ENCODE measurements at regions of chr1 and their contacts with region 1.

Region 1: DNA sequence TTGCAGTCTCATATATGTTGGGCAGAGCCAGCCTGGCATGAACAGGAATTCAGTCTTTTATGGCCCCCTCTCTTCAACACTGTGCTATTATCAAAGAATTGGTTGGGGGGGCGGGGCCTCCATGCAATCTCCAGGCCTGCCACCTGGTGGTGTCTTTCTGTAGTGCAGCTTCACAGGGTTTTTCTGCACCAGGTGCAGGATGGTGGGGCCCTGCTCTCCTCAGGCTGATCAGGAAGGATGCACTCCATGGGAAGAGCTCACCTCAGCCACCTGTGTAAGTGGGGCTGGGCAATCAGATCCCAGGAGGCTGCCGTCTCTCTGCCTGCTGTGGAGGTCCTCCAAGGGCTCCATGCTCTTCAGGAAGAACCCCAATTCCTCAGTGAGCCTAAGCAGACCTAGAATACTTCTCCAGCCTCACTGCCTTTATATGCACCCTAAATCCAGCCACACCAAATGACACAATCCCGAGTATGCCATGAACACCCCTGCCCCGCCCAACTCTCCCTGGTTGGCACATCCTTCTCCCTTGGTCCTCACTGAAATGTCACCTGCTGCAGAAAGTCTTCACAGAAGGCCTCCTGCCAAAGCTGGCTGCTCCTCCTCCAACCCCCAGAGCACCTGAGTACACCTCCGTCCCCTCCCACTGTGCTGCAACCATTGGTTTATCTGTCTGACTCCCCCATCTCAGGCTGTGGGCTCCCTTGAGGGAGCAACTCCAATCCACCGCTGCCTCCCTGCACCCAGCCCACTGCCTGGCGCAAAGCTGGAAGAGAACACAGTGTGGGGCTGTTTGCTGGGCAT is 16.5 kb downstream of the STK40 start:
- DNase-seq: no peak
- ATAC-seq: peak; percentile 58
- H3K4me3 ChIP-seq: no peak overlapping the region
- H3K27ac ChIP-seq: no peak overlapping the region
- H3K4me1 ChIP-seq: peaks cover 55% of the 10 kb centered on the region
- H3K27me3 ChIP-seq: no peaks in the 10 kb centered on the region
- CTCF ChIP-seq: peak; percentile 86 to 92 (median 90)
- EP300 ChIP-seq: no peak
- POLR2A ChIP-seq: no peak
- RAD21 ChIP-seq: peak; percentile 73

Region 2: DNA sequence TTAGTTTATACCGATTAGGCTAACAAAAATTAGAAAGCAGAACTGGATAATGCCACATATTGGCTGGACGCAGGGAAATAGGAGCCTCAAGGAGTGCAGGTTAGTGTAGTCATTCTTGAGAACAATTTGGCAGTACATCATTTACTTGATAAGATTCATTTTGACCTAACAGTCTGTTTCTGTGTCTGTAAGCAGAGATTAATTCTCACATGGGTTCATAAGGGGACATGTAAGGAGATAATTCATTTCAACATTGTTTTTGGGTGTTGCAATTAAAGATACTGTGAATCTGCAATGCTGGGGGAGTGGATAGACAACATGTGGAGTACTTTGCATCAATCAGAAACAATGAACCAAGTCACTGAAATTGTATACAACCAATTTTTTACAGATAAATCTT is 406.3 kb before region 1 on chr1:
- CTCF ChIA-PET with region 1: no interaction called
- POLR2A ChIA-PET with region 1: no interaction called
- RAD21 ChIA-PET with region 1: no interaction called
- SMC1A ChIA-PET with region 1: no interaction called
- in situ Hi-C with region 1: no loop called
- intact Hi-C with region 1: no loop called
- DNase-seq: no peak
- ATAC-seq: no peak
- H3K4me3 ChIP-seq: no peak overlapping the region
- H3K27ac ChIP-seq: no peak overlapping the region
- H3K4me1 ChIP-seq: no peaks in the 10 kb centered on the region
- H3K27me3 ChIP-seq: no peaks in the 10 kb centered on the region
- CTCF ChIP-seq: no peak
- EP300 ChIP-seq: no peak
- POLR2A ChIP-seq: no peak
- RAD21 ChIP-seq: no peak

Region 3: DNA sequence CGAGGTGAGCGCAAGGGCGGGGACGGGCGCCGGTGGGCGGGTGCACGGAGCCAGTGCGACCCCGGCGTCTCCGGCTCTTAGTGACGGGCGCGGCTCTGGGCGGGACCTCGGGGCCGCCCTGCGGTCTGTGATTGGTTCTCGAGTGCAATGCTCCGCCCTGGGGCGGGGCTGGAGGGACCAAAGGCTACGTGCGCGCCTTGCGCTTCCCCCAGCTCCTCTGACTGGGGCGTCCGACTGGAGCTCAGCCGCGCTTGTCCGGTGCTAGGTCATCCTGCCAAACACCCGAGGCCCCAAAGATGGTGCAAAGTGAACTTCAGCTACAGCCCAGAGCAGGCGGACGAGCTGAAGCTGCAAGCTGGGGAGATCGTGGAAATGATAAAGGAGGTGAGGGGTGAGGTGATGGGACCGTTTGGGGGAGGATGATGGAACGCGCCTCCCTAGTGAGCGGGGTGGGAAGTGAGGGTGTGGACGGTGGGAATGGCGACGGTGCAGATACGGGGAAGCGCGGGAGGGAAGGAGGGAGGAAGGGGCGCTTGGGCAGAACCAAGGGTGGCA is 62.3 kb before region 1 on chr1:
- CTCF ChIA-PET with region 1: interaction called, 24 read pairs
- POLR2A ChIA-PET with region 1: interaction called, 3 read pairs
- RAD21 ChIA-PET with region 1: interaction called, 6 read pairs
- SMC1A ChIA-PET with region 1: interaction called, 3 read pairs
- in situ Hi-C with region 1: no loop called
- intact Hi-C with region 1: no loop called
- DNase-seq: peak; percentile 80
- ATAC-seq: peak; percentile 99
- H3K4me3 ChIP-seq: peak overlapping the region; percentile 95
- H3K27ac ChIP-seq: peak overlapping the region; percentile 46
- H3K4me1 ChIP-seq: peaks cover 27% of the 10 kb centered on the region
- H3K27me3 ChIP-seq: no peaks in the 10 kb centered on the region
- CTCF ChIP-seq: no peak
- EP300 ChIP-seq: no peak
- POLR2A ChIP-seq: peak; percentile 98
- RAD21 ChIP-seq: no peak

Region 4: GRCh38 chr1:36342481-36343478 is 26.5 kb before region 1 on chr1:
- CTCF ChIA-PET with region 1: interaction called, 157 read pairs
- POLR2A ChIA-PET with region 1: interaction called, 3 read pairs
- RAD21 ChIA-PET with region 1: interaction called, 36 read pairs
- SMC1A ChIA-PET with region 1: interaction called, 36 read pairs
- in situ Hi-C with region 1: no loop called
- intact Hi-C with region 1: loop called (anchors 1 kb)
- DNase-seq: no peak
- ATAC-seq: peak; percentile 93
- H3K4me3 ChIP-seq: no peak overlapping the region
- H3K27ac ChIP-seq: no peak overlapping the region
- H3K4me1 ChIP-seq: no peaks in the 10 kb centered on the region
- H3K27me3 ChIP-seq: no peaks in the 10 kb centered on the region
- CTCF ChIP-seq: peak; percentile 68 to 90 (median 87)
- EP300 ChIP-seq: no peak
- POLR2A ChIP-seq: no peak
- RAD21 ChIP-seq: peak; percentile 93

Region 5: DNA sequence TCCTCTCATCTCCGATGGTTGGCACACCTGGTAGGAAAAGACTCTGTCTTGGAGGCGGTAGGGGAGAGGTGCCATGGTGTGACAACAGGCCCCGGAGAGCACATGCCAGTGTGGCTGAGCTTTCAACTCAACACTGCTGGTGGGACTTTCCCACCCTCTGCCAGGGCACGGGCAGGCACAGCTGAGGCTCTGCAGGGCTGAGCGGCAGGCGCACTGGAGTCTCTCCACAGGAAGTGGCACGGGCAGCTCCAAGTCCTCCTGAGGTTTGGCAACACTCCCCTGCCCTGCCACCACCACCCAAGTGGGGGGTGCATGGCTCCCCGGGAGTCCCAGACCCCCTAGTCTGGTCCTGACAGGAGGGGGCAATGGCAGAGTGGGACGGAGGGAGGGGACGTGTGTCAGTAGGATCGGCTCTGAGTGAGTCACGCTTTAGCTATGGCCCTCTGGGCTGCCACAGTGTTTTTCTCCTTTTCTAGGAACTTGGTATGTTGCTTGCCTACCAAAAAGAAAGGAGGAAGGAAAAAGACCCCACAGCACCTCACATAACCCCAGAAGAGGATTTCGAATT is 18.5 kb before region 1 on chr1:
- CTCF ChIA-PET with region 1: interaction called, 157 read pairs
- POLR2A ChIA-PET with region 1: interaction called, 15 read pairs
- RAD21 ChIA-PET with region 1: interaction called, 17 read pairs
- SMC1A ChIA-PET with region 1: interaction called, 24 read pairs
- in situ Hi-C with region 1: no loop called
- intact Hi-C with region 1: loop called (anchors 2 kb)
- DNase-seq: no peak
- ATAC-seq: peak; percentile 49
- H3K4me3 ChIP-seq: no peak overlapping the region
- H3K27ac ChIP-seq: peak overlapping the region; percentile 79
- H3K4me1 ChIP-seq: peaks cover 37% of the 10 kb centered on the region
- H3K27me3 ChIP-seq: no peaks in the 10 kb centered on the region
- CTCF ChIP-seq: no peak
- EP300 ChIP-seq: no peak
- POLR2A ChIP-seq: no peak
- RAD21 ChIP-seq: no peak

Region 6: DNA sequence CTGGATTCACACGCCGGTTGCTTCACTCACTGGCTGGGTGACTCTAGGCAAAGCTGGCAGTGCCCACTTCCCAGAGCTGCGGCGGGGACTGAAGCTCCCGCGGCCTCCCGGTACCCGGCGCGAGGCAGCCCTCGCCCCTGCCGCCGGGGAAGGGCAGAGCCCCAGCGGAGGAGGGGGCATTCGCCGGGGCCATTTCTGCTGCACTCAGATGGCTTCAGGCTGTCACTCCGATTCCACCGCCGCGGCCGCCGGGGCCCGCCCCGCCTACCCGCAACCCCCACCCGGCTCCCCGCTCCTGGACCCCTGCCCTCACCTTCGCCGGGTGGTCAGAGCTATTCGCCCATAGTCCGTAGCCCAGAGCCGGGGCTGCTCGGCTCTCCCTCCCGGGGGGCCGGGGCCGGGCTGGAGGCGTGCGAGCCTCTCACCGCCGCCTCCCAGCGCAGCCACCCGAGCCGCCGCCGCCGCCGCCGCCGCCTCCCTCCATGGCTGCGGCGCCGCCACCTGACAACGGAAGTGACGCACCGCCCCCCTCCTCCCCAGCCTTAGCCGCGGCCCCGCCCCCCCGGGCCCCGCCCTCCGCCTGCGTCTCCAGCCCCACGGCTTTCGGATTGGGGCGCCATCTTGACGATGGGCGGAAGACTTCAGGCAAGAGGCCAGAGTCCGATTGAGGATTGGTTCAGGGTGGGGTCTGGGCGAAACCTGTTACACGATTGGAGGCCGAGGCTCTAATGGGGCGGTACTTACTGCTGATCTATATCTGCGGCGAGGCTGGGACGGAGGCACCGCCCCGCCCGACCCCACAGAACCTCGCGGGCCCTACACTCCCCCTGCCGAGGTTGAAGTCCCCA is 16.4 kb after region 1 on chr1 and contains the start of gene STK40:
- CTCF ChIA-PET with region 1: interaction called, 35 read pairs
- POLR2A ChIA-PET with region 1: interaction called, 8 read pairs
- RAD21 ChIA-PET with region 1: interaction called, 17 read pairs
- SMC1A ChIA-PET with region 1: no interaction called
- in situ Hi-C with region 1: no loop called
- intact Hi-C with region 1: no loop called
- DNase-seq: peak; percentile 95
- ATAC-seq: peak; percentile 90
- H3K4me3 ChIP-seq: peak within 1 kb of the TSS; percentile 85
- H3K27ac ChIP-seq: peak within 1 kb of the TSS; percentile 99
- H3K4me1 ChIP-seq: peaks cover 44% of the 10 kb centered on the region
- H3K27me3 ChIP-seq: no peaks in the 10 kb centered on the region
- CTCF ChIP-seq: no peak
- EP300 ChIP-seq: no peak
- POLR2A ChIP-seq: peak; percentile 50
- RAD21 ChIP-seq: no peak
- polyA plus RNA-seq, gene STK40: 0.27 to 2.1 TPM

Region 7: GRCh38 chr1:36397378-36398230 is 28.3 kb after region 1 on chr1 and contains the start of gene LSM10:
- CTCF ChIA-PET with region 1: interaction called, 15 read pairs
- POLR2A ChIA-PET with region 1: interaction called, 4 read pairs
- RAD21 ChIA-PET with region 1: interaction called, 10 read pairs
- SMC1A ChIA-PET with region 1: interaction called, 17 read pairs
- in situ Hi-C with region 1: no loop called
- intact Hi-C with region 1: no loop called
- DNase-seq: peak; percentile 70
- ATAC-seq: peak; percentile 95
- H3K4me3 ChIP-seq: peak within 1 kb of the TSS; percentile 94
- H3K27ac ChIP-seq: peak within 1 kb of the TSS; percentile 77
- H3K4me1 ChIP-seq: peaks cover 13% of the 10 kb centered on the region
- H3K27me3 ChIP-seq: no peaks in the 10 kb centered on the region
- CTCF ChIP-seq: no peak
- EP300 ChIP-seq: no peak
- POLR2A ChIP-seq: peak; percentile 92
- RAD21 ChIP-seq: no peak
- polyA plus RNA-seq, gene LSM10: 26.6 to 36.0 TPM

Region 8: DNA sequence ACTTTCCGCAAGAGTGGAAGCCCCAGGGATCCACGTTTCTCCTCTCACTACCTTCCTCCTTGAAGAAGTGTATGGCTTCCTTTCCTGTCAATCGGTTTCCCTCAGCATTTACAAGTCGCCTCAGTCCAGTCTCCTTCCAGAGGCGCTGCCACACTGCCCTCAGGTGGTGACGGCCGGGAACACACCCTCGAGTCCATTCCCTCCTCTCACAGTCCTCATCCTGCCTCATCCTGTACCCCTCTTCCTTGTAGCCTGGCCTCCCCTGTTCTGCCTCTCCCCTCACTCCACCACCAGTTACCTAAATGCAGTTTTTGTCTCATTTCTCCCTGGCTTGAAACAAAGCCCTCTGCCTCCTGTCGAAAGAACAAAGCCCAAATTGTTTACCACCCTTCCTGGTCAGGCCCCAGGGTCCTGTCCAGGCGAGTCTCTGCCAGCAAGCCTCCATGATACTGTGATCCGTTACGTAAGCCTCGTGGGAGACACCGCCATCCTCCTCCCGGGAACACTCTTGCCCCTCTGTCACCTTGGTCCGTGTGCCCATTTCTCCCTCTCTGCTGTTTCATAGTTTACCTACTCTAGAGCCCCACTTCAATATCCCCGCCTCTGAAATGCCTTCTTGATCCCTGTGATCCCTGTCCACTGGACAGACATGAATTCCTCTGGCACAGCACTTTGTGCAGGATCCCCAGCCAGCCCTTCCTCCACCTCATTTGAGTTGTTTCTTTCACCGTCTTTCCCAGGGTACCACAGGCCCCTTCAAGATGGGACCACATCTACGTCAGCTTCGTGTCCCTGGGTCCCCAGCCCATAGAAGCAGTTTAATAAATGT is 51.8 kb after region 1 on chr1:
- CTCF ChIA-PET with region 1: interaction called, 28 read pairs
- POLR2A ChIA-PET with region 1: interaction called, 4 read pairs
- RAD21 ChIA-PET with region 1: interaction called, 7 read pairs
- SMC1A ChIA-PET with region 1: interaction called, 9 read pairs
- in situ Hi-C with region 1: no loop called
- intact Hi-C with region 1: no loop called
- DNase-seq: peak; percentile 74
- ATAC-seq: peak; percentile 100
- H3K4me3 ChIP-seq: no peak overlapping the region
- H3K27ac ChIP-seq: peak overlapping the region; percentile 31; the same call in 1 of the 2 replicates
- H3K4me1 ChIP-seq: peaks cover 6% of the 10 kb centered on the region; the same call in 1 of the 2 replicates
- H3K27me3 ChIP-seq: no peaks in the 10 kb centered on the region
- CTCF ChIP-seq: peak; percentile 95 to 98 (median 96); a peak in 5 of 6 replicates
- EP300 ChIP-seq: no peak
- POLR2A ChIP-seq: no peak
- RAD21 ChIP-seq: peak; percentile 97

Measured in GM12878 (cell line).